Endothelial cell of umbilical vein (primary cell): ENCODE measurements at regions of chr20 and their contacts with region 1.

Region 1: GRCh38 chr20:33791959-33792597 is 19.1 kb upstream of the CHMP4B start:
- DNase-seq: peak; percentile 61
- H3K4me3 ChIP-seq: no peak overlapping the region
- H3K27ac ChIP-seq: no peak overlapping the region
- H3K4me1 ChIP-seq: peaks cover 44% of the 10 kb centered on the region
- H3K27me3 ChIP-seq: no peaks in the 10 kb centered on the region
- CTCF ChIP-seq: peak; percentile 79 to 80
- POLR2A ChIP-seq: no peak

Region 2: DNA sequence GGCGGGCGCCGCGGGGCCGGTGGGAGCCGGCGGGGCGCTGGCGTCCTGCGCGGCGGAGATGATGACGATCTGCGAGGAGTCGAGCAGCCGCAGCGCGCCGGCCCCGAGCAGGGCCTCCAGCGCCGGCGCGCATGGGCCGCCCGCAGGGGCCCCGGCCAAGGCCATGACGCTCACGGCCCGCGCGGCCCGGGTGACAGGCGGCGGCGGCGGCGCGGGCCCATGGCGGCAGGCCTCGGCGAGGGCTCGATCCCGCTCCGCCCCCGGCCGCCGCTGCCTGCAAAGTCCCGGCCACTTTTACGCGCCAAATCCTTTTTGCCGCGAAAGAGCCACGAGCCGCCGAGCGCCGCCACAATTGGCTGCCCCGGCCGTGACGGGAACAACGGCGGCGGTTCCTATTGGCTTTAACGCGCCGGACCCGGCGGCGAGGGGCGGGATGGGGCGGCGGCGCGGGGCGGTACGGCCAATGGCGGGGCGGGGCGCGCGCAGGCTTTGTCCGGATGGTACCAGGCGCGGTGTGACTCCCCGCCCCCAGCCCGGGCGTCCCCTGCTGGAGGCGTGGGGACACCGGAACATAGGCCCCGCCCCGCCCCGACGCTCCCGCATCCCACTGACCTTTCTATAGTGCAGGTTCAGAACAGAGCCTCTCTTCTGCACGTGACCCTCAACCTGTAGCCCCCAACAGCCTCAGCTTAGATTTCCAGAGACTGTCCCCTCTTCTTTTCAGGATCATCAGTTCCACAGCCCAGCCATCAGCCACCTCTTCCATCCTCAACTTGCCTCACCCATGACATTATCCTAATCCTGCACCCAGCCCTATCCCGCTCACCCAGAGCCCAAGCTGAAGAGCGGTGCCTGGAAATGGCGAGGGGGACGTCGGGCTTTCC is 105.7 kb before region 1 on chr20 and contains the start of gene E2F1:
- CTCF ChIA-PET with region 1: interaction called, 3 read pairs
- POLR2A ChIA-PET with region 1: no interaction called
- dilution Hi-C with region 1: no loop called
- intact Hi-C with region 1: loop called (anchors 1 kb)
- DNase-seq: peak; percentile 95
- H3K4me3 ChIP-seq: peak within 1 kb of the TSS; percentile 4 to 50 (median 11)
- H3K27ac ChIP-seq: peak within 1 kb of the TSS; percentile 15
- H3K4me1 ChIP-seq: peaks cover 36% of the 10 kb centered on the region
- H3K27me3 ChIP-seq: no peaks in the 10 kb centered on the region
- CTCF ChIP-seq: peak in 1 of 2 donors; percentile 30
- POLR2A ChIP-seq: no peak
- total RNA-seq, gene E2F1: 27.0 and 29.6 TPM in 2 replicates

Region 3: DNA sequence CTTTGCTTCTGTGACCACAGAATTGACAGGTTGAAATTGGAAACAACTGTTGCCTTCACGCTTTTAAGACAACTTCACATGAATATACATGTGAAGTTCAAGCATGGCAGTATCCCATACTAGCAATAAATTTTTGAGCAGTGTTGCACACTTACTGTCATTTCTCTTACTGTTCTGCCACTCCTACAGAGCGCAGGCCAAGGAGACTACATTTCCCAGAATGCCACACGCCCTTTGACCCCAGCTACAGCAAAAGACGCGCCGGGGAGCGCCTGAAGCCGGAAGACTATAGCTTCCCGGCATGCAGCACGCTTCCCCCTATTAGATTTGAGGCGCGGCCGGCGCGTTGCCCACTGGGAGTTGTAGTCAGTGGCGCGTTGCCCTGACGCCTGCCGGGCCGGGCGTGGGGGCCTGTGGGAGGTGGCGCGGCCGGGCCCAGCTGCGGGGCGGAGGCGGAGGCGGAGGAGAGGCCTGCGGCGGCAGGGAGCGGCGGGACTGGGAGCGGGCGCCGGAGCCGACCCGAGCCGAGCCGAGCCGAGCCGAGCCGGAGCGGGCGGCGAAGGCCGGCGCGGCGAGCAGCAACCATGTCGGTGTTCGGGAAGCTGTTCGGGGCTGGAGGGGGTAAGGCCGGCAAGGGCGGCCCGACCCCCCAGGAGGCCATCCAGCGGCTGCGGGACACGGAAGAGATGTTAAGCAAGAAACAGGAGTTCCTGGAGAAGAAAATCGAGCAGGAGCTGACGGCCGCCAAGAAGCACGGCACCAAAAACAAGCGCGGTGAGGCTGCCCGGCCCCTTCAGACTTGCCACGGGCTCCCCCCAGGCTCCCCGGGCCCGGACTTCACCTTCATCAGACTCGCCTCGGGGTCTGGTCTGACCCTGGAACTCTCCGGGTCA is 19.1 kb after region 1 on chr20 and contains the start of gene CHMP4B:
- CTCF ChIA-PET with region 1: interaction called, 8 read pairs
- POLR2A ChIA-PET with region 1: interaction called, 4 read pairs
- dilution Hi-C with region 1: no loop called
- intact Hi-C with region 1: loop called (anchors 1 kb)
- DNase-seq: peak; percentile 98
- H3K4me3 ChIP-seq: peak within 1 kb of the TSS; percentile 60 to 86 (median 83)
- H3K27ac ChIP-seq: peak within 1 kb of the TSS; percentile 96
- H3K4me1 ChIP-seq: peaks cover 23% of the 10 kb centered on the region
- H3K27me3 ChIP-seq: no peaks in the 10 kb centered on the region
- CTCF ChIP-seq: no peak
- POLR2A ChIP-seq: peak; percentile 69
- total RNA-seq, gene CHMP4B: 105 and 112 TPM in 2 replicates

Region 4: GRCh38 chr20:33992923-33993575 is 201.0 kb after region 1 on chr20:
- CTCF ChIA-PET with region 1: no interaction called
- POLR2A ChIA-PET with region 1: interaction called, 4 read pairs
- dilution Hi-C with region 1: no loop called
- intact Hi-C with region 1: loop called (anchors 1 kb)
- DNase-seq: peak; percentile 100
- H3K4me3 ChIP-seq: peak overlapping the region; percentile 92 to 99 (median 96)
- H3K27ac ChIP-seq: peak overlapping the region; percentile 86
- H3K4me1 ChIP-seq: peaks cover 19% of the 10 kb centered on the region
- H3K27me3 ChIP-seq: no peaks in the 10 kb centered on the region
- CTCF ChIP-seq: no peak
- POLR2A ChIP-seq: peak; percentile 96

Region 5: GRCh38 chr20:34129518-34130162 is 337.6 kb after region 1 on chr20:
- CTCF ChIA-PET with region 1: no interaction called
- POLR2A ChIA-PET with region 1: no interaction called
- dilution Hi-C with region 1: no loop called
- intact Hi-C with region 1: loop called (anchors 1 kb)
- DNase-seq: peak; percentile 78
- H3K4me3 ChIP-seq: no peak overlapping the region
- H3K27ac ChIP-seq: no peak overlapping the region
- H3K4me1 ChIP-seq: peaks cover 3% of the 10 kb centered on the region
- H3K27me3 ChIP-seq: no peaks in the 10 kb centered on the region
- CTCF ChIP-seq: peak; percentile 61 to 76
- POLR2A ChIP-seq: no peak

Region 6: GRCh38 chr20:34155836-34156235 is 363.8 kb after region 1 on chr20:
- CTCF ChIA-PET with region 1: no interaction called
- POLR2A ChIA-PET with region 1: no interaction called
- dilution Hi-C with region 1: no loop called
- intact Hi-C with region 1: no loop called
- DNase-seq: no peak
- H3K4me3 ChIP-seq: no peak overlapping the region
- H3K27ac ChIP-seq: no peak overlapping the region
- H3K4me1 ChIP-seq: no peaks in the 10 kb centered on the region
- H3K27me3 ChIP-seq: peaks cover 0 to 5% of the 10 kb centered on the region in 2 experiments
- CTCF ChIP-seq: no peak
- POLR2A ChIP-seq: no peak